ENCODE measurements at regions of chr3 and their contacts with region 1.

Region 1: GRCh38 chr3:94004301-94004910 is 24.0 kb downstream of the STX19 start:
- DNase-seq: no peak
- ATAC-seq: peak; percentile 64 to 69
- H3K4me3 ChIP-seq: peak overlapping the region; percentile 50
- H3K27ac ChIP-seq: no peak overlapping the region
- H3K4me1 ChIP-seq: no peaks in the 10 kb centered on the region
- H3K27me3 ChIP-seq: no peaks in the 10 kb centered on the region

Region 2: DNA sequence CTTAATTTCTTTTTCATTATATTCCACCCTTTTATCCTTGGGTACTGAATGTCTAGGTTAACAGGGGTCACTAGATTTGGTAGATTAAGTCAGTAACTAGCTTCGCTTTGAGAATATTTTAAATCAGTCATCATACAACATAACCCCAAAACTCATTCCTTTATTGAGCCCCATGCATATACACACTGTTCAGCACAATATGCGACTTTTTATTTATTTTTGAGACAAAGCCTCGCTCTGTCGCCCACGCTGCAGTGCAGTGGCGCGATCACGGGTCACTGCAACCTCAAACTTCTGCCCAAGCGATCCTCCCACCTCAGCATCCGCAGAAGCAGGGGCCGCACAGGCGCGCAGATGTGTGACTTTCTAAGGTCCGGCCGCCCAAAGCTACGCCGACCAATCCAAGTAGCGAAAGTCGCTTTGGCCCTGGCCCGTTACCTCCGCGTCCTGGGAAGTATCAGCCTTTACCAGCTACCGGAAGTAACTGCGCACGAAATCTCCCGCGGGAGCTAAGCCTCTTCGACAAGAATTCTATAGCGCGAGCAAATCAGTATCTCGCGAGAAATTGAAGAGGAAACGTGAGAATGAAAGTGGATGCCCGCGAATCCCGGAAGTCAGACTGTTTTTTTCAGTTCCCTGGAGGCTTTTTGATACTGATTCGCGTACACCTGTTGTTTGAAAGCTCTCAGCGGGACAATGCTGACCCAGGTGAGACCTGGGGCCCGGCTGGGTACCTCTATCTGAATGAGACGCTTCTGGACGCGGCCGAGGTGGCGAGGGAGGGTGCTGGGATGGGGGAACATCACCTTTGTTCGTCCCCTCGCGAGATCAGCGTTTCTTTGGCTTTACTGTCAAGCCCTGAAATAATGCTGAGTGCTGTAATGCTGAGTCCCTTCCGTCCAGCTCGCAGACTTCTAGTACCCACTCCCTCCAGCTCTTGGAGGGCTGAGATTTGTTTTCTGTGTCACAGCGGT is 58.3 kb after region 1 on chr3 and contains the starts of genes DHFR2 and NSUN3:
- intact Hi-C with region 1: loop called in 3 of 4 experiments (anchors 5 to 10 kb)
- DNase-seq: peak; percentile 96 to 97 (median 96)
- ATAC-seq: peak; percentile 98 to 99
- H3K4me3 ChIP-seq: peak within 1 kb of the TSS; percentile 77
- H3K27ac ChIP-seq: peak within 1 kb of the TSS; percentile 86
- H3K4me1 ChIP-seq: no peaks in the 10 kb centered on the region
- H3K27me3 ChIP-seq: no peaks in the 10 kb centered on the region
- total RNA-seq, gene DHFR2: 3.5 to 5.7 (median 4.2) TPM
- total RNA-seq, gene NSUN3: 6.4 to 9.0 (median 7.4) TPM

Measured in right cardiac atrium (tissue), 5 donors.